HEK293T (cell line): ENCODE measurements at regions of chr17 and their contacts with region 1.

Region 1: DNA sequence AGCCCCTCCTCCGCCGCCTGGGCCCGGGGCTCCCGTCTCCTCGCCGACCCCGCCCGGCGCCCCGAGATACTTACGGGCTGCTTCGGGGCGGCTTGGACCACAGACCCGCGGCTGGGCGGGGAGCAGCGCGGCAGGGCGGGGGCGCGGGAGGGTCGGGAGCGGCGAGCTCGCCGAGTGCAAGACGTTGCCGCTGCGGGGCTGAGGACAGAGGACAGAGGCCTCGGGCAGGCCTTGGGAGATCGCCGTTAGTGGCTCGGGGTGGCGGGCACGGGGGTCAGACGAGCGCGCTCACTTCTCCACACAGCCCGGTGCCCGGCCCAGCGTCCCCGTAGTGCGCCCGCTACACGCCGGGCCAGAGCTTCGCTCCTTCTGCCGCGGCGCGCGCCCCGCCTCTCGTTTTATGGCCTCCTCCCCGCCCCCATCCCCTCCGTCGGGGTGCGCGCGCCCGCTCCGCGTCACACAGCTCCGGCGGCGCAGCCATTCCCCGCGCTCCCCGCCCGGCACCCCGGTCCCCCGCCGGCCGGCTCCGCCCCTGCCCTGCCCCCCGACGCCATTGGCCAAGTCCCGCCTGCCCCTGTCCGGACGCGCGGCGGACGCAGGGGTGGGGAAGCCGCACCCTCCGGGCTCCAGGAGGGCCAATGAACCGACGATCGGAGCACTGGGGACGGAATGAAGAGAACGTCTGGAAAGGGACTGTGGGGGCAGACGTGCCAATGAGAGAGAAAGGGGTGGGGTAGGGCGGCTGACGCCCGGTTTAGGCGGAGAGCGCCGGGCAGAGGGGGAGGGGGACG is at the start of gene TOB1:
- DNase-seq: peak; percentile 90

Region 2: GRCh38 chr17:50853015-50853615 is 13.1 kb before region 1 on chr17:
- CTCF ChIA-PET with region 1: interaction called, 32 read pairs
- POLR2A ChIA-PET with region 1: interaction called, 53 read pairs
- DNase-seq: no peak

Region 3: DNA sequence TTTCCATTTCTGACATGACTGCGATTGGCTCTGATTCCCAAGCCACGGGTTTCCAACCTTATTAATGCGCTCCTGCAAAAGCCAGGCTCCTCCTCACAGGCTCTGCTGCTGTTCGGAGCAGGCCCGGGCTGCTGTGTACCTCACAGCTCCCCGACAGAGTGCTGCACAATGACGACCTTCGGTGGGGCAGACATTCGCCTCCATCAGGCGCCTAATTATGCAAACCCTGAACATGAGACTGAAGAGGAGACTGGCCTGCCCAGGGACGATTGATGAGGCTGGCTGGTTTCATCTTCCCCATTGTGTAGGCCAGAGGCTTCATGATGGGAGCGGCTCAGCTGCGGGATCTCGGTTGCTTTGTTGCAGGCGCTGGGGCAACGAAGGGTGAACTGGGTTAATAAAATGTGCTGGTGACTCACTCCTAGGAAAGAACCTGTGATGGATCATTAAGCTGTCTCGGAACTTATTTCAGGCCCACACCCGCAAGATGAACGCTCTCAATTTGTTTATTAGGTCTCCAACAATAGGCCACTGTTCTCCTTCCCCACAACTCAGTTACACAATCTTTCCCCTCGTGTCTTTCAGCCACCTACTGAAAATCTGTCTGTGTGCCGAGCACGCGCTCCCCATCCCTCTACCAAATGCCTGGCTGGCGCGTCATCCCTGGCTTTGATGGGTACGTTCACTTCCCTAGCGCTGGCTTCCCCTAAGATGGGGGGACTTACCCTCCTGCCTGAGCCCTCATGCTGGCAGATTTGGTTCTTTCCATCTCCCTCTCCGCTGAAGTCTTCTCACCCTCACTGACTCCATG is 27.2 kb after region 1 on chr17:
- CTCF ChIA-PET with region 1: interaction called, 3 read pairs
- POLR2A ChIA-PET with region 1: interaction called, 20 read pairs
- DNase-seq: no peak

Region 4: DNA sequence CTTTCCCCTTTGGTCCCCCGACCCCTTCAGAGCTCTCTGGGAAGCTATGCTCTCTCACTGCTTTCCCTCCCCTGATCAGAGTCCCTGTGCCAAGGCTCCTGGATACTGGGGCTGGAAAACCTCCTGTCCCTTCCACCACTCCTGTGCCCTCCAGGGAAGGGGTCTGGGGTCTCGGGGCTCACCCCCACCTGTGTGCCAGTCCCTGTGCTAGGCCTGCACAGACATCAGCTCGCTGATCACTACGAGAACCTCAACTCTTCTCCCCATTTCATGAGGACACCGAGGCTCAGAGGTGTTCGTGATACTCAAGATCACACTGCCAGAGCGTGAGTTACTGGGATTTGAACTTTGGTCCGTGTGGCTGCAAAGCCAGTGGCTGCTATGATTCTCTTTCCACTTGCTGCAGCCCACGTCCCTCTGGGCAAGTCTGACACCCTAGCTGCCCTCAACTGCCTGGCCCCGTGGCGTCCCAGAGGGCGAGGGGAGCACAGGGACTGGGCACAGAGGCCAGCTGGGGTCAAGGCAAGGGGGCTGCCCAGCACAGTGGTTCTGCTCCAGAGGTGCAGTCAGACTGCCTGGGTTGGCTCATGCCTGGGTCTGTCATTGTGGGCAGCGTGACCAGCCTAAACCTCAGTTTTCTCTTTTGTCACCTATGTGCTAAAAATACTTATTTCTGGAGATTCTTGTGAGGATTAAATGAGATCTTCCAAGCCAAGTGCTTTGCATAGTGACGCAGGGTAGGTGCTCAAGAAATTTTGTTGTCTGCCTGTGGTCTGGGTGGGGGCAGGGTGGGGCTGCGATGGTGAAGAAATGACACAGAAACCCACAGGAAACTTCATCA is 43.8 kb after region 1 on chr17:
- CTCF ChIA-PET with region 1: interaction called, 3 read pairs
- POLR2A ChIA-PET with region 1: interaction called, 60 read pairs
- DNase-seq: no peak

Region 5: GRCh38 chr17:50944054-50944901 is 78.1 kb after region 1 on chr17:
- CTCF ChIA-PET with region 1: interaction called, 15 read pairs
- POLR2A ChIA-PET with region 1: interaction called, 93 read pairs
- DNase-seq: peak; percentile 60

Region 6: DNA sequence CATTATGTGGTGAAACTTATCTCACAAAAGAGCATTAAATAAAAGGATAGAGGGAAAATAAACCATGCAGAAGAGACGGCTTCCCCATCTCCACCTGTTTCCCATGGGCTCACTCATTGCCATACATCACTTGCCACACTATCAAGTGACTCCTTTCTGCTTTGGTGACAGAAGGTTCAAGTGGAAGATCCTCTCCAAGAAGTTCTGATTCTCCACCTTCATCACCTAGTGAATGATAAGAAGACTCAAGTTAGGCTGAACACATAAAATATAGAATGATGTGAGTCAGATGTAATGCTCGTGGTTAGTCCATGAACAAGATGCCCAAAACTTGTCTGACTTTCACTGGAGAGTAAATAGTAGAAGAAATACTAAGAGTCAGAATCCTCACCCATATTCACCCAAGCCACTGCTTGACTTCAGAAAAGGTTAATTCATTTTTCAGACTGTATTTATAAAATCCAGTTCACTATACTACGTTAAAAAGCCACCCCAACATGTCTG is 100.0 kb after region 1 on chr17:
- CTCF ChIA-PET with region 1: no interaction called
- POLR2A ChIA-PET with region 1: no interaction called
- DNase-seq: no peak